Heart left ventricle (tissue), 16 donors: ENCODE measurements at regions of chr6 and their contacts with region 1.

Region 1: GRCh38 chr6:80197474-80197873 is 91.0 kb downstream of the BCKDHB start:
- DNase-seq: peak in 3 of 5 donors; percentile 18 to 52 (median 27)
- ATAC-seq: peak; percentile 93 to 96 (median 95)
- H3K4me3 ChIP-seq: no peak overlapping the region
- H3K27ac ChIP-seq: peak overlapping the region in 2 of 12 donors; percentile 35 to 42
- H3K4me1 ChIP-seq: peaks cover 0 to 9% (median 0%) of the 10 kb centered on the region in 12 donors
- H3K27me3 ChIP-seq: no peaks in the 10 kb centered on the region
- CTCF ChIP-seq: no peak
- POLR2A ChIP-seq: no peak

Region 2: DNA sequence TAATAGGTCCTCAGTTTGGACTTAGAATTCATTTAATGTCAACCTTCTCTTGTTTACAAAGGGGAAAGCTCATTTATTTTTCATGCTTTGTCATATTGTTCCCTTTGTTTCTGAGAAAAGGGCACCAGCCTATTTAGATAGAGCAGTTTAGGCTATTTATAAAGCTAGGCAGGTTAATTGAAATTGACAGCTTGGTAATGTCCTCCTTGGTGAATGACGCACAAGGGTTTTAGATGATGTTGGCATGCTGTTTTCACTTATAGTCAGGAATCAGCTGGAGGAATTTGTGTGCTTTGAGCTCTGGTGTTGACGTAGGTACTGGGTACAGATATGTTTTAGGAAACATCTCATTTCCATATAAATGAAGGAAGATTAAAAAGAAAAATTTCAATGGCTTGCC is 45.8 kb before region 1 on chr6:
- intact Hi-C with region 1: loop called in 3 of 10 experiments (anchors 5 kb)
- DNase-seq: no peak
- ATAC-seq: peak; percentile 89 to 94 (median 93)
- H3K4me3 ChIP-seq: no peak overlapping the region
- H3K27ac ChIP-seq: peak overlapping the region in 1 of 12 donors; percentile 37
- H3K4me1 ChIP-seq: peaks cover 0 to 3% (median 0%) of the 10 kb centered on the region in 12 donors
- H3K27me3 ChIP-seq: no peaks in the 10 kb centered on the region
- CTCF ChIP-seq: no peak
- POLR2A ChIP-seq: no peak